ENCODE measurements at regions of chrX and their contacts with region 1.

Region 1: DNA sequence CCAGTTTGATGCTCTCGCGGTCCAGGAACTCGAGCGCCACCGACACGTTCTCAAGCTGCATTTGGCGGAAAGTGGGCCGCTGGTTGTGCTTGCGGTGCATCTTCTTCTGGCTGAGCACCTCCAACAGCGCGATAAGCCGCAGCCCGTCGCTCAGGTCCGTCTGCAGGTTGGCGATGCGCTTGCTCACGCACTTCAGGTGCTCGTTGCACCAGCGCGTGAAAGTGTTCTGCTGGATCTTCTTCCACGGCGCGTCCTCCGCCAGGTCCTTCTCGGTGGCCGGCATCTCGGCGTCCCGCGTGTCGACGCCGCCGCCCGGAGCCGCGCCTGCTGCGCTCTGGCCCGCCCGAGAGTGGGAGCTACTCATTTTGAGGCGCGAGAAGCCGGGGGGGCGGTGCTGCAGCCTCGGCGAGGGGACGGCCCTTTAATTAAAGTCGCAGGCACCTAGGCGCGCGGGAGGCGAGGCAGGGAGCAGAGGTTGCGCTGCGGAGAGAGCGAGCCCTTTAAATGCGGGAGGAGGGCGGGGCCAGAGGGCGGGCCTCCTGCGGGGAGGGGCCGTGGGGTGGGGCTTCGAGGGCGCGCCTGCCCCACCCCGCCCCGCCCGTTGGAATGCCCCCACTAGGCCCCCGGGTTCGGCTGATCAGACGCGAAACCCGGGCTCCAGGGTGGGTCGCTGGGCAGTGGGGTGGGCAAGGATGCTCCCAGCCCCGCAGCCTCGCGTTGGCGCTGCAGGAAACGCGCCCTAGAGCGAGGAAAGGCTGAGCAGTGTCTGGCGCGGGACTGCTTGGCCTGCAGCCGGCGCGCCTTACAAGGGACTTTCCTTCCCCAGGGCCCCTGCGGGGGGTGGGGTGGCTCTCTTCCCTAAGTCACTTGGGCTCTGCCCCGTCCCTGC is 3.3 kb downstream of the FLNA start:
- DNase-seq: peak; percentile 92 to 93
- H3K4me3 ChIP-seq: peak overlapping the region; percentile 98
- H3K4me3 Mint-ChIP-seq: peak overlapping the region; percentile 83
- H3K27ac Mint-ChIP-seq: peak overlapping the region; percentile 61
- H3K4me1 ChIP-seq: peaks cover 22% of the 10 kb centered on the region
- H3K4me1 Mint-ChIP-seq: no peaks in the 10 kb centered on the region
- H3K27me3 ChIP-seq: no peaks in the 10 kb centered on the region
- H3K27me3 Mint-ChIP-seq: no peaks in the 10 kb centered on the region
- CTCF ChIP-seq: no peak

Region 2: GRCh38 chrX:153794018-153794896 is 576.9 kb before region 1 on chrX and contains the starts of genes IDH3G and SSR4:
- CTCF ChIA-PET with region 1: no interaction called
- POLR2A ChIA-PET with region 1: interaction called, 10 read pairs
- intact Hi-C with region 1: loop called (anchors 5 kb)
- DNase-seq: peak; percentile 92
- H3K4me3 ChIP-seq: peak within 1 kb of the TSS; percentile 52
- H3K4me3 Mint-ChIP-seq: peak within 1 kb of the TSS; percentile 90
- H3K27ac Mint-ChIP-seq: peak within 1 kb of the TSS; percentile 89
- H3K4me1 ChIP-seq: 0 out of 2 replicates have a peak, but pooled peaks cover 4% of the 10 kb centered on the region
- H3K4me1 Mint-ChIP-seq: no peaks in the 10 kb centered on the region
- H3K27me3 ChIP-seq: no peaks in the 10 kb centered on the region
- H3K27me3 Mint-ChIP-seq: no peaks in the 10 kb centered on the region
- CTCF ChIP-seq: no peak
- total RNA-seq, gene IDH3G: 53.3 and 54.0 TPM in 2 replicates
- total RNA-seq, gene SSR4: 353 and 373 TPM in 2 replicates

Region 3: DNA sequence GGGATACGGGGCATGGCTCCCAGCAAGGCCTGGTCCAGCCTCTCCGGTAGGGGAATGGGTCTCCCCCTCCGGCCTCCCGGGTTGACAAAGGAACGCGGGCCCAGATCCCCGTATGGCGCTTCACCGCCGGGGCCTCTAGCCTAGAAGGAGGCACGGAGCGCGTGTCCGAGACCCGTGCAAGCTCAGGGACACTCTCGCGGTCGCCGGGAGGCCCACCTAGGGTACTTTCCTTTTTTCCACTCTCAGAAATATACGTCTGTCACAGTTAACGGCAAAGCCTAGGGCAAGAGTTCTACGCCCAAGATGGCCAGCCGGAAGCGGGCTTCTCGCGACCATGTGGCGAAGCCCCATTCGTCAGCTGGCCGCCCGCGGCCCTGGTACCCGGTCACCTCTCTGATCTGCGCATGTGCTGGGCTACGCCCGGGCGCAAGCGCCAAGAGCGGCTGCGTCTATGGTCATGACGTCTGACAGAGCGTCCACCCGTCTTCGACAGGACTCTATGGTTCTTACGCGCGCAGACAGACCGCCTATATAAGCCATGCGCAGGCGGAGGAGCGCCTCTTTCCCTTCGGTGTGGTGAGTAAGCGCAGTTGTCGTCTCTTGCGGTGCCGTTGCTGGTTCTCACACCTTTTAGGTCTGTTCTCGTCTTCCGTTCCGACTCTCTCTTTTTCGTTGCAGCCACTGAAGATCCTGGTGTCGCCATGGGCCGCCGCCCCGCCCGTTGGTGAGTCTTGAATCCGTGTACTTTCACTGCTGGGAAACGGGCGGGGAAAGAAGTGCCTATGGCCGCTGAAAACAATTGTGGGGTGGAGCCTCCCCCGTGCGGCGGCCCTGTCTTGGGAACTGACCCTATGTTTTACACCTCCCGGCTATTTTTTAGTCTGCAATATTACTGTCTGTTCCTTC is 26.9 kb after region 1 on chrX and contains the start of gene RPL10:
- CTCF ChIA-PET with region 1: interaction called, 6 read pairs
- POLR2A ChIA-PET with region 1: interaction called, 12 read pairs
- intact Hi-C with region 1: no loop called
- DNase-seq: peak; percentile 95 to 96
- H3K4me3 ChIP-seq: peak within 1 kb of the TSS; percentile 76
- H3K4me3 Mint-ChIP-seq: peak within 1 kb of the TSS; percentile 97
- H3K27ac Mint-ChIP-seq: peak within 1 kb of the TSS; percentile 100
- H3K4me1 ChIP-seq: peaks cover 21% of the 10 kb centered on the region
- H3K4me1 Mint-ChIP-seq: peaks cover 8% of the 10 kb centered on the region
- H3K27me3 ChIP-seq: no peaks in the 10 kb centered on the region
- H3K27me3 Mint-ChIP-seq: no peaks in the 10 kb centered on the region
- CTCF ChIP-seq: no peak
- total RNA-seq, gene RPL10: 2,081 and 2,086 TPM in 2 replicates

Region 4: DNA sequence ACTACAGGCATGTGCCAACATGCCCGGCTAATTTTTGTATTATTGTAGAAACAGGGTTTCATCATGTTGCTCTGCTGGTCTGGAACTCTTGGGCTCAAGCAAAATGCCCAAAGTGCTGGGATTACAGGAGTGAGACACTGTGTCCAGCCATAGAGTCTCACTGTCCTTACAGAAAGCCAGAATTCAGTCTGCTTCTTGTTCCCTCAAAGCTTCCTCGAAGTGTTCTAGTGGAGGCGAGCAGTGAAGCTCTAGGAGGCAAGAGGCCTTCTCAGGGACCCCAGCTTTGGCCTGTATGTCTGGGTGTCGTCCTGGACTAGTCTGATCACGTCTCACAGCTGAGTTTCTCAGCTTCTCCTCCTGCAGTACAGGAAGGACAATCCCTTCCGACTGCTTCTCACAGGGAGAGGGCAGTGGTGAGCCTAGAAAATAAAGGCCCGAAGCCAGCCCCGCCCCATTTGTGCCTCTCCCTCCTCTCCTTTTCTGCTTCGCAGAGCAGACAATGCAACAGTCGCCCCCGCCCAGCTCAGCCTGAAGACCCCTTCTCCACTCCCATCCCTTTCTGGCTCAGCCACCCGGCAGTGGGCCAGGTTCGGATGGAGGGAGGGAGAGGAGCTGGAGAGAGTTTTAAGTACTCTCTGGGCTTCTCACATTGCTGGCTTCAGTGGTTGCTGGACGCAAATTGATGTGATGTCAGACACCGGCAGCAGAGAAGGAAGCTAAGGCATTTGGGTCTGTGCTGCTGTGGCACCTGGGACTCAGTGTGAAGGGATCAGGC is 156.0 kb after region 1 on chrX:
- CTCF ChIA-PET with region 1: interaction called, 18 read pairs
- POLR2A ChIA-PET with region 1: interaction called, 4 read pairs
- intact Hi-C with region 1: no loop called
- DNase-seq: peak; percentile 76 to 78
- H3K4me3 ChIP-seq: peak overlapping the region; percentile 6; the same call in 1 of the 2 replicates
- H3K4me3 Mint-ChIP-seq: peak overlapping the region; percentile 55
- H3K27ac Mint-ChIP-seq: no peak overlapping the region
- H3K4me1 ChIP-seq: peaks cover 14% of the 10 kb centered on the region
- H3K4me1 Mint-ChIP-seq: peaks cover 7% of the 10 kb centered on the region
- H3K27me3 ChIP-seq: no peaks in the 10 kb centered on the region
- H3K27me3 Mint-ChIP-seq: no peaks in the 10 kb centered on the region
- CTCF ChIP-seq: peak; percentile 29 to 55

Region 5: GRCh38 chrX:154534862-154535670 is 163.9 kb after region 1 on chrX:
- CTCF ChIA-PET with region 1: interaction called, 5 read pairs
- POLR2A ChIA-PET with region 1: no interaction called
- intact Hi-C with region 1: loop called (anchors 1 kb)
- DNase-seq: peak; percentile 78 to 87
- H3K4me3 ChIP-seq: no peak overlapping the region
- H3K4me3 Mint-ChIP-seq: no peak overlapping the region
- H3K27ac Mint-ChIP-seq: no peak overlapping the region
- H3K4me1 ChIP-seq: peaks cover 5% of the 10 kb centered on the region; the same call in 1 of the 2 replicates
- H3K4me1 Mint-ChIP-seq: no peaks in the 10 kb centered on the region
- H3K27me3 ChIP-seq: no peaks in the 10 kb centered on the region
- H3K27me3 Mint-ChIP-seq: no peaks in the 10 kb centered on the region
- CTCF ChIP-seq: peak; percentile 91 to 94

Measured in Caco-2 (cell line).